ENCODE measurements at regions of chr22 and their contacts with region 1.

Region 1: GRCh38 chr22:40757071-40757470 is 62.1 kb downstream of the SLC25A17 start:
- DNase-seq: no peak
- H3K4me3 ChIP-seq: no peak overlapping the region
- H3K27ac ChIP-seq: no peak overlapping the region
- H3K4me1 ChIP-seq: no peaks in the 10 kb centered on the region
- H3K27me3 ChIP-seq: no peaks in the 10 kb centered on the region

Region 2: GRCh38 chr22:40714192-40714951 is 42.7 kb before region 1 on chr22:
- CTCF ChIA-PET with region 1: interaction called, 20 read pairs
- POLR2A ChIA-PET with region 1: no interaction called
- DNase-seq: peak in 2 of 3 donors; percentile 73 to 80
- H3K4me3 ChIP-seq: peak overlapping the region in 2 of 7 experiments; percentile 29 to 45
- H3K27ac ChIP-seq: no peak overlapping the region
- H3K4me1 ChIP-seq: peaks cover 0 to 39% (median 29%) of the 10 kb centered on the region in 4 experiments
- H3K27me3 ChIP-seq: peaks cover 0 to 1% (median 0%) of the 10 kb centered on the region in 5 experiments

Region 3: GRCh38 chr22:40746428-40747220 is 10.4 kb before region 1 on chr22:
- CTCF ChIA-PET with region 1: interaction called, 14 read pairs
- POLR2A ChIA-PET with region 1: no interaction called
- DNase-seq: no peak
- H3K4me3 ChIP-seq: no peak overlapping the region
- H3K27ac ChIP-seq: no peak overlapping the region
- H3K4me1 ChIP-seq: no peaks in the 10 kb centered on the region
- H3K27me3 ChIP-seq: no peaks in the 10 kb centered on the region

Region 4: GRCh38 chr22:41574847-41575381 is 817.8 kb after region 1 on chr22:
- CTCF ChIA-PET with region 1: no interaction called
- POLR2A ChIA-PET with region 1: no interaction called
- DNase-seq: no peak
- H3K4me3 ChIP-seq: no peak overlapping the region
- H3K27ac ChIP-seq: no peak overlapping the region
- H3K4me1 ChIP-seq: no peaks in the 10 kb centered on the region
- H3K27me3 ChIP-seq: peaks cover 0 to 7% (median 0%) of the 10 kb centered on the region in 5 experiments